ENCODE measurements at regions of chr1 and their contacts with region 1.

Region 1: DNA sequence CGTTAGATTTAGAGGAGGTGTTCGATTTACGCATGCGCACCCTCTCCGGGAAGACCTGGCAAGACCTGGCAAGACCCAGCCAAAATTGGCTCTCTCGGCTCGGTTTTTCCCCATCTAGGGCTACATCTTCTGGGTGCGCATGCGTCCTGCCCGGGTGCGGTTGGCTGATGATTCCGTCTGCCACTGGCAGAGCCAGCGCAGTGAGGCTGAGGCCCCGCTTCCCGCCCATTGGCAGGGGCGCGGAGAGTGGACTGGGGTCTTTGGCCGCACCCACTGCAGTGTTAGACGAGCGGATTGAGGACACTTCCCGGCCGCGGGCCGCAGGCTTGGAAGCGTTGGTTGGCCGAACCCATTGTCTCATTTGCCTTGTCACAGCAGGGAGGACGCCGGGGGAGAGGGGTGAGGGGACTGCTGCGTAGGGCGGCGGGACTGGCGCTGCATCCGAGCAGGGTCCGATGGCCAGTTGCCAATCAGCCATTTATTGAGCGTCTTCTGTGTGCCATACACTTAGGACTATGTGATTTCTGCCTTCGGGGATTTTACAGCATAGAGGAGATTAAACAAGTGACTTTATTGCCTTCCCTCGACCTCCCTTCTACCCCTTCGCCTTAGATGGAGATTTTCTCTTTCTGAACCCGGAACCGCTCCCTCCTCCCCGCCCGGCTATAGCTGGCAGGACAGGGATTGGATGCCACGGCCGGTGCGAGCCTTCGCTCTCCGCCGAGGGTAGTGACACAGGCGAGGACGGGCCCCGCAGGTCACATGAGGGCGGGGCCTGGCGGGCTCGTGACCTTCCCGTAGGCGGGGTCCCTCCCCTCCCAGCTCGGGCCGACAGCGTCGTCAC is 43.7 kb downstream of the MEF2D start:
- DNase-seq: peak; percentile 92
- H3K4me3 Mint-ChIP-seq: peak overlapping the region; percentile 89
- H3K27ac Mint-ChIP-seq: peak overlapping the region; percentile 98
- H3K4me1 Mint-ChIP-seq: peaks cover 14% of the 10 kb centered on the region
- H3K27me3 Mint-ChIP-seq: peaks cover 5% of the 10 kb centered on the region

Region 2: GRCh38 chr1:156338180-156338973 is 118.5 kb before region 1 on chr1 and contains the starts of genes CCT3 and TSACC:
- intact Hi-C with region 1: loop called (anchors 1 kb)
- DNase-seq: peak; percentile 99
- H3K4me3 Mint-ChIP-seq: peak within 1 kb of the TSS; percentile 98
- H3K27ac Mint-ChIP-seq: peak within 1 kb of the TSS; percentile 95
- H3K4me1 Mint-ChIP-seq: peaks cover 41% of the 10 kb centered on the region
- H3K27me3 Mint-ChIP-seq: peaks cover 5% of the 10 kb centered on the region
- total RNA-seq, gene CCT3: 567 and 570 TPM in 2 replicates
- total RNA-seq, gene TSACC: 0.81 TPM in 1 of 2 replicates, not detected in the other

Region 3: DNA sequence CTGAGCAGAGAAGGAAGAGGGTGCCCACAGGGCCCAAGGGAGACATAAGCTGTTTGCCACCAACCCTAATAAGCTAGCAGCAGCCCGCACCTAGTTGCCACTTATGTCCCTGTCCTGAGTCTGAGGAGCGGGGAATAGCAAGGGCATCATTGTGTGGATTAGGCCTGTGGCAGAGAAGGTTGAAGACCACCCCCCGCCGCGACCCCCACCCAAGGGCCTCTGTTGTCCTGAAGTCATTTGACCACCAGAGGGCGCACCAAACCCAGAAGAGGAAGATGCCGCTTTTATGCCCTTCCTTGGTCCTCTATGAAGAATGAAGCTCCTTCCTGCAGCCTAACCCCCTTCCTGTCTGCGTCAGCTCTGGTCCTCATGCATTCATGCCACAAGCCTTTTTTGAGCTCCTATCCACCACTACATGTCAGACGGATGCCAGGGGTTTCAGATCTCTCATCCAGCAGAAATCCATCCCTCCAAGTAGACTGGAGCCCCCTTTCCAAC is 71.3 kb before region 1 on chr1:
- intact Hi-C with region 1: no loop called
- DNase-seq: peak; percentile 59
- H3K4me3 Mint-ChIP-seq: no peak overlapping the region
- H3K27ac Mint-ChIP-seq: no peak overlapping the region
- H3K4me1 Mint-ChIP-seq: peaks cover 5% of the 10 kb centered on the region
- H3K27me3 Mint-ChIP-seq: peaks cover 34% of the 10 kb centered on the region

Region 4: GRCh38 chr1:156445789-156446263 is 11.0 kb before region 1 on chr1:
- intact Hi-C with region 1: loop called (anchors 1 kb)
- DNase-seq: peak; percentile 67
- H3K4me3 Mint-ChIP-seq: no peak overlapping the region
- H3K27ac Mint-ChIP-seq: no peak overlapping the region
- H3K4me1 Mint-ChIP-seq: peaks cover 25% of the 10 kb centered on the region
- H3K27me3 Mint-ChIP-seq: peaks cover 56% of the 10 kb centered on the region

Region 5: GRCh38 chr1:156480411-156481192 is 23.8 kb after region 1 on chr1:
- intact Hi-C with region 1: loop called (anchors 2 kb)
- DNase-seq: peak; percentile 63
- H3K4me3 Mint-ChIP-seq: peak overlapping the region; percentile 17
- H3K27ac Mint-ChIP-seq: peak overlapping the region; percentile 78
- H3K4me1 Mint-ChIP-seq: peaks cover 53% of the 10 kb centered on the region
- H3K27me3 Mint-ChIP-seq: no peaks in the 10 kb centered on the region

Region 6: GRCh38 chr1:156571949-156572662 is 115.3 kb after region 1 on chr1 and contains the start of gene IQGAP3:
- intact Hi-C with region 1: loop called (anchors 1 kb)
- DNase-seq: peak; percentile 74
- H3K4me3 Mint-ChIP-seq: peak within 1 kb of the TSS; percentile 96
- H3K27ac Mint-ChIP-seq: peak within 1 kb of the TSS; percentile 76
- H3K4me1 Mint-ChIP-seq: peaks cover 28% of the 10 kb centered on the region
- H3K27me3 Mint-ChIP-seq: peaks cover 18% of the 10 kb centered on the region
- total RNA-seq, gene IQGAP3: 10.3 and 11.2 TPM in 2 replicates

Region 7: DNA sequence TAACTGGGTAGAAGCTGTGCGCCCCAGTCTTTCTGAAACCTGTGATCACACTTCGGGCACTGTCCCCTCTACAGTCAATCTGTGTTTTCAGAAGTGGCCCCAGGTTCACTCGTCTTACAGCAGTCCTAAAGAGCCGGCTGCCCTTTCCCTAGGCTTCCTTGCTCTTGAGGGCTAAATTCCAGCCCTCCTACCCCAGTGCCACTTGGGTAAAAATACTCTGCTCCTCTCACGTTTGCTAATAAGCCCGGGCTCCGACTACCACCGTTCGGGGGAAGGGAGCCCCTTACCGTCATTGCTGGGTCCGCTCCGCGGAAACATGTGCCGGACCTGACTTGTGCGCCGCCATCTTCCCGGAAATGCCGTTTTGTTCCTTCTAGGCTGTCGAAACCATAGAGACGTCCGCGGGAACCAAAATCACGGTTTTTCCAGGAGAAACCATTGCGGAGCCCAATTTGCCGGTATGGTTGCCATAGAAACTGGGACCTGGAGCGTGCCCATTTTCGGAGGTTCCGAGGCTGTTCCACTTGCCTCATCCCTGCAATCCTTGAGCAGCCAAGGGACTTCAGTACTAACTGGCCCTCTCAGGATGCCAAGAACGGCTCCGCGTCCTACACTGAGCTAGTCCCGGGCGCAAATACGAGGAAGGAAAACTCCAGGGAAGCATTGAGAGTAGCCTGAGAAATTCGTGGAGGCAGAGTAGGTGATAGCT is 144.4 kb after region 1 on chr1 and contains the start of gene GPATCH4:
- intact Hi-C with region 1: loop called (anchors 2 kb)
- DNase-seq: peak; percentile 76
- H3K4me3 Mint-ChIP-seq: peak within 1 kb of the TSS; percentile 100
- H3K27ac Mint-ChIP-seq: peak within 1 kb of the TSS; percentile 99
- H3K4me1 Mint-ChIP-seq: peaks cover 37% of the 10 kb centered on the region
- H3K27me3 Mint-ChIP-seq: no peaks in the 10 kb centered on the region
- total RNA-seq, gene GPATCH4: 102 and 104 TPM in 2 replicates

Region 8: GRCh38 chr1:156608036-156608674 is 151.3 kb after region 1 on chr1:
- intact Hi-C with region 1: loop called (anchors 1 kb)
- DNase-seq: peak; percentile 49
- H3K4me3 Mint-ChIP-seq: no peak overlapping the region
- H3K27ac Mint-ChIP-seq: no peak overlapping the region
- H3K4me1 Mint-ChIP-seq: peaks cover 12% of the 10 kb centered on the region
- H3K27me3 Mint-ChIP-seq: peaks cover 14% of the 10 kb centered on the region